Panc1 (cell line): ENCODE measurements at regions of chr5 and their contacts with region 1.

Region 1: DNA sequence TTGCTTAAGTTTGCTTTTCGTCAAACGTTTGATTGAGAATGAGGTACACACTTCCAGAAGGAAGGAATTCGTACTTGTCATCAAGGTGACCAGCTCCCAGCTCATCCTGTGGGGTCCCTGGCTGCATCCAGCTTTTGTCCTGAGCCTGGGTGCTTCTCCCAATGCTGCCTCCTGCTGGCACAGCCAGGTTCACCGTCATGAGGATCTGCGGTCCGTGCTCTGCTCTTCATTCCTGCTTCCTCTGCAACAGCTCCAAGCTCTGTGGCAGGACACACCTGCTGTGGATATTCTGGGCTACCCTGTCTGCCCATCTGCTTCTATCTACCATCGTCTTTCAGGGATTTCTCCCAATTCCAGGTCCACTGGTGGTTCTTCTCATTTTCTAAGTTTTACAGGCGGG is 13.3 kb upstream of the UBE2QL1 start:
- DNase-seq: no peak
- ATAC-seq: 0 out of 2 replicates have a peak, but pooled peaks have one; percentile 63
- H3K4me3 ChIP-seq: no peak overlapping the region
- H3K27ac ChIP-seq: no peak overlapping the region
- H3K4me1 ChIP-seq: no peaks in the 10 kb centered on the region
- H3K27me3 ChIP-seq: peaks cover 22% of the 10 kb centered on the region
- CTCF ChIP-seq: peak; percentile 64

Region 2: DNA sequence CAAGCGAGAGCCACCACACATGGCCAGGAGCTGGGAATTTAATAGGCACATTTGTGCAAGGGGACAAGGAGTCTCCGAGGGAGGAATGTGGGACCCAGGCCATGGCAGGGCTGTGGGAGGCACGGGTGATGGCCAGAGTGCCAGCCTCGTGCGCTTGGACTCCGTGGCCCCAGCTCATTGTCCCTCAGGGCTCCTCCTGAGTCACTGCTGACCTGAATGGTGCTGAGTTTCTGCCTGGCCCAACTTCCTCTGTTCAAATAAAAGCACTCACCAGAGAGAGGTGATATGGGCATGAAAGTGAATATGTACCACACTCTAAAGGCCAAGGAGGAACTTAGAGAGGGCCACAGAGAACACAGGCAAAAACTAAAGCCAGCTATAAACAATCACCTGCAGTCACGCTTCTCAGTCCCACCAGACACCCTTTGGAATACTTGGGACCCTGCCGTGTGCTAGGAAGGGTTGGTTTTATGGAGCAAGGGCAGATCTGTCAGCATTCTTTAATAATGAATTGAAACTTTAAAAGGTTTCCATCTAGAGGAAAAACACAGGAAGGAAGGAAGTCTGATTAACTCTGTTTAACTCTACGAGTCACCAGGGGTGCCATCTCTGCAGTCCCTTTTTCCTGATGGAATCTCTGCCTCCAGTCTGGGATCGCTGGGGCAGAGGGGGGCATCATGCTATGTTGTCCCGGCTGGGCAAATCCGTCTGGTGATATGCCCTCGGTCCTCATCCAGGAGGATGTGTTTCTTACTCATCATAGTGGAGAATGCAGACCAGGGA is 11.8 kb before region 1 on chr5:
- CTCF ChIA-PET with region 1: no interaction called
- POLR2A ChIA-PET with region 1: interaction called, 10 read pairs
- in situ Hi-C with region 1: no loop called
- intact Hi-C with region 1: no loop called
- DNase-seq: no peak
- ATAC-seq: no peak
- H3K4me3 ChIP-seq: no peak overlapping the region
- H3K27ac ChIP-seq: no peak overlapping the region
- H3K4me1 ChIP-seq: no peaks in the 10 kb centered on the region
- H3K27me3 ChIP-seq: no peaks in the 10 kb centered on the region
- CTCF ChIP-seq: no peak